PC-9 (cell line): ENCODE measurements at regions of chr14 and their contacts with region 1.

Region 1: DNA sequence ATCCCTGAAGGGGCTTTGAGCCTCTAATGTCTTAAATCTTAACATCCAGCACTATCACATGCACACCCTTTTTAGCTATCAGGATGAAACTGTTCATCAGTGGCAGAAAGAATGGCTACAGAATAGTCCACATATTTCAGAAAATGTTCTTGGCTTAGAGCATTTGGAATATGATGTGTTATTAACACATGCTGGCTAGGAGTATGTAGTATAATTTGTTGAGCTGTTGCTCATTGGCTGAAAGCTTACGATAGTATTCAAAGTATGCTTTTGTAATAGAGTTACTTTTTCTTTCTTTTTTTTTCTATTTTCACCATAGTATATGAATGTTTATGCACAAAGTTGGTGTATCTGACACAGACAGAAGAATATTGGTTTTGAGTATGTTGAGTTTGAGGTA is 55.1 kb downstream of the MNAT1 start:
- DNase-seq: no peak
- H3K4me3 ChIP-seq: no peak overlapping the region
- H3K27ac ChIP-seq: no peak overlapping the region
- H3K4me1 ChIP-seq: peaks cover 10% of the 10 kb centered on the region; the same call in 1 of the 2 replicates
- H3K27me3 ChIP-seq: no peaks in the 10 kb centered on the region
- CTCF ChIP-seq: no peak

Region 2: DNA sequence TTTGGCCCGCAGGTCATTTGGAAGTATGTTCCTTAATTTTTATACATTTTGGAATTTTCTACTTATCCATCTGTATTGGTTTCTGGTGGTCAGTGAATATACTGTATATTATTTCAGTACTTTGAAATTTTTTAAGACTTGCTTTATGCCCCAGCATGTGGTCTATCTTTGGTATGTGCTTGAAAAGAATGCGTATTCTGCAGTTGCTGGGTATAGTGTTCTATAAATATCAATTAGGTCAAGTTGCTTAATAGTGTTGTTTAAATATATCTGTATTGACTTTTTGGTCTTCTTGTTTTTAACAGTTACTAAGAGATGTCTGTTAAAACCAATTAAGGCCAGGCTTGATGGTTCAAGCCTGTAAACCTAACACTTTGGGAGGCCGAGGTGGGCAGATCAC is 118.7 kb before region 1 on chr14:
- CTCF ChIA-PET with region 1: interaction called, 12 read pairs
- POLR2A ChIA-PET with region 1: no interaction called
- intact Hi-C with region 1: no loop called
- DNase-seq: no peak
- H3K4me3 ChIP-seq: no peak overlapping the region
- H3K27ac ChIP-seq: no peak overlapping the region
- H3K4me1 ChIP-seq: no peaks in the 10 kb centered on the region; the same call in 1 of the 2 replicates
- H3K27me3 ChIP-seq: no peaks in the 10 kb centered on the region
- CTCF ChIP-seq: no peak

Region 3: DNA sequence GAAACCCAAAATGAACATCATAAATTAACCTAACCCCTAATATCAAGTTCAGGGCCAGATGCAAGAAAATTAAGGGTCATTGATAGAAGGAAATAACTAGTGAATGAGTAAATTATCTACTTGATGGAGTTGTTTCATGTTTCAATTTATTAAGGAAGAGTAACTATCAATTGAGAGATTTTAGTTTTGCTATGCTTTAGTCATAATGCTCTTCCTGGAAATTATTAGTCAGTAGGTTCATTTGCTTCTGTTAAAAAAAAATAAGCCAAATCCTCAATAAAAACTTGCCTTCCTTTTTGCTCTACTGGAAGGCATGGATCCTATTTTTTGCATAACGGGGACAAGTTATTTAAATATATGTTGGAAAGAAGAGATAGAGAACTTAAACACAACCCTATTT is 846.6 kb after region 1 on chr14:
- CTCF ChIA-PET with region 1: no interaction called
- POLR2A ChIA-PET with region 1: interaction called, 19 read pairs
- intact Hi-C with region 1: no loop called
- DNase-seq: no peak
- H3K4me3 ChIP-seq: no peak overlapping the region
- H3K27ac ChIP-seq: no peak overlapping the region
- H3K4me1 ChIP-seq: no peaks in the 10 kb centered on the region
- H3K27me3 ChIP-seq: no peaks in the 10 kb centered on the region
- CTCF ChIP-seq: no peak